ENCODE measurements at regions of chr17 and their contacts with region 1.

Region 1: GRCh38 chr17:81034779-81035388 is at the start of gene BAIAP2:
- DNase-seq: peak; percentile 92 to 99
- H3K4me3 ChIP-seq: peak within 1 kb of the TSS; percentile 37
- CTCF ChIP-seq: no peak
- POLR2A ChIP-seq: peak in 1 of 2 donors; percentile 86
- total RNA-seq, gene BAIAP2: 190 to 308 (median 224) TPM

Region 2: DNA sequence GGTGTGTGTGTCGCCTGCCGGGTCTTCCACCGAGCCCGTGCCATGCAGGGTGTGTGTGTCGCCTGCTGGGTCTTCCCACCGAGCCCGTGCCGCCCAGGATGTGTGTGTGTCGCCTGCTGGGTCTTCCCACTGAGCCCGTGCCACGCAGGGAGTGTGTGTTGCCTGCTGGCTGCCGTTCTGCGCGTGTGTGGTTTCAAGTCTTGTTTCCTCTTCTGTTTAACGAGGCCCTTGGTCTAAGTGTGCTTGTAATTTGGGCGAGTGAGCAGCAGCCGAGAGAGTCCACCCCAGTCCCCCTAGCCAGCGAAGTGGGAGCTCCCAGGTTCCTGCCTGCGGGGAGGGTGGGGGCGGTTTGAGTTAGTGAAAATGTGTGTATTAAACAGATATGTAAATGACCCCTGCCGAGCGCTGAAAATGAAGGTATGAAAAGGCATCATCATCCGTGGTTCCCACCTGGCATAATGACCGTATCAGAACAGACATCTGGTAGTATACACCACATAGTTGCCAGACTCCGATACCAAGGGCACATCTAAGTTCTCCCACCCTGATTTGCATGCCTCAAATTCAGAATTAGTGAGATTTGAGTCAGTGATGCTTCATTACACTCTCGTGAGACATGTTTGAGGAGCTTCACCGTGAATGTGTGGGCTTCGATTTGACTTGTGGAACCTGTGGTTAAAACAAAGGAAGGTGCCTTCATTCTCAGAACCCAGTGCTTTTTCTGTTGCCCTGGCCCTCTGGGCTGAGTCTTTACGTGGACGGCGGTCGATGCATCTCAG is 157.7 kb before region 1 on chr17:
- intact Hi-C with region 1: no loop called
- DNase-seq: no peak
- H3K4me3 ChIP-seq: no peak overlapping the region
- CTCF ChIP-seq: no peak
- POLR2A ChIP-seq: no peak

Region 3: DNA sequence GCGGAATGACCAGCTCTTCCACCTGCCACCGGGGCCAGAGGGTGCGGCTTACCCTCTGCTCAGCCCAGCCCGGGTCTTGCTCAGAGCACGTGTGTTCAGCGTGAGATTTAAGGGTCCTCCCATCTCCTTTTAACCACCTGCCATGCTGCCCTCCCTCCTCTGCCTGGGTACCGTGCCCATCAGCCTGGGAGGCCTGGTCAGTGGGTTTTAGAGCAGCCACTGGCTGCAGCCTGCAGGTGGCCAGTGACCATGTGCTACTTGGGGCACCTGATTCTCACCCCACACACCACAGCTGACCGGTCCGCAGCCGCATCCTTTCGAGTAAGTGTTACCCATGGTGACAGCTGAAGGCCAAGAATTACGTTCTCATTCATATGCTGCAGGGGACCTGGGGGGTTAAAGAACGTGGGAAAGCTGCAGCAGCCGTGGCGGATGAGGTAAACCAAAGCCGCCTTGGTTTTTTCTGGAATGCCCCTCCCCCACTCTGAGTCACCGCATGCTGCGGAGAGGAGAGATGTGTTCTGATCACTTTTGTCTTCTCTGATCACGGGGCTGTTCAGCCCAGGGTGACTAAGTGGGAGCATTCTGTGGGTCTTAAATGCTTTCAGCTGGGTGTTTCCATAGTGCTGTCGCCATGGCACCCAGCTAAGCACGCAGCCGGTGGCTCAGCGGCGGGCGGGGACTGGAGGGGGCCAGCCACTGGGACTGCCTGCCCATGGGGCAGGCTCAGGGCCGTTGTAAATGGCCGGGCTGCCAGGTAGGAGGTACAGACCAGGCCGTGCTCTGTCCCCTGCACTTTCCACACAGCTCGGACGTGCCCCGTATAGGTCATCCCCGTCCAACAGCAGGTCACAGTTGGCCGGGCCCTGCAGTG is 59.9 kb after region 1 on chr17:
- intact Hi-C with region 1: loop called (anchors 5 kb)
- DNase-seq: peak; percentile 91 to 97
- H3K4me3 ChIP-seq: no peak overlapping the region
- CTCF ChIP-seq: no peak
- POLR2A ChIP-seq: no peak

Region 4: DNA sequence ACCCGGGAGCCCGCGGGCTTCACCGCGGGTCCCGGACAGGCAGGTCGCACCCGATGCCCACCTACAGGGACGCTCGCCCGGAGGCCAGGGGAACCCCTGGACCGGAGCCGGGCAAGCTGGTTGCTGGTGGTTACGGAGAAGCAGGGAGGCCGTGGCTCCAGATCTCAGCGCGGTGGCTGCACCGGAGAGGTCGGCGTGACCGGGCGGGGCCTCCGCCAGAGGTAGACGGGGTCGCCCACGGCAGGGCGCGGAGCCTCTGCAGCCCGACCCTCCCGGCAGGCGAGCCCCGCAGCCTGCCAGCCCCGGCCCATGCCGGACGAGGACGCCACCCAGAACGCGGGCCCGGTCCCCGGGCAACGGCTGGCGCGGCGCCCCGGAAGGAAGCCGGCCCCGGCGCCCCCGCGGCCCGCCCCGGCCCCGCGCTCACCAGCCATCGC is 876.0 kb after region 1 on chr17:
- intact Hi-C with region 1: no loop called
- DNase-seq: no peak
- H3K4me3 ChIP-seq: peak overlapping the region; percentile 60
- CTCF ChIP-seq: no peak
- POLR2A ChIP-seq: no peak